Activated B cell treated with CpG ODN at 0.5 μM for 24 hours (primary cell): ENCODE measurements at regions of chr19 and their contacts with region 1.

Region 1: DNA sequence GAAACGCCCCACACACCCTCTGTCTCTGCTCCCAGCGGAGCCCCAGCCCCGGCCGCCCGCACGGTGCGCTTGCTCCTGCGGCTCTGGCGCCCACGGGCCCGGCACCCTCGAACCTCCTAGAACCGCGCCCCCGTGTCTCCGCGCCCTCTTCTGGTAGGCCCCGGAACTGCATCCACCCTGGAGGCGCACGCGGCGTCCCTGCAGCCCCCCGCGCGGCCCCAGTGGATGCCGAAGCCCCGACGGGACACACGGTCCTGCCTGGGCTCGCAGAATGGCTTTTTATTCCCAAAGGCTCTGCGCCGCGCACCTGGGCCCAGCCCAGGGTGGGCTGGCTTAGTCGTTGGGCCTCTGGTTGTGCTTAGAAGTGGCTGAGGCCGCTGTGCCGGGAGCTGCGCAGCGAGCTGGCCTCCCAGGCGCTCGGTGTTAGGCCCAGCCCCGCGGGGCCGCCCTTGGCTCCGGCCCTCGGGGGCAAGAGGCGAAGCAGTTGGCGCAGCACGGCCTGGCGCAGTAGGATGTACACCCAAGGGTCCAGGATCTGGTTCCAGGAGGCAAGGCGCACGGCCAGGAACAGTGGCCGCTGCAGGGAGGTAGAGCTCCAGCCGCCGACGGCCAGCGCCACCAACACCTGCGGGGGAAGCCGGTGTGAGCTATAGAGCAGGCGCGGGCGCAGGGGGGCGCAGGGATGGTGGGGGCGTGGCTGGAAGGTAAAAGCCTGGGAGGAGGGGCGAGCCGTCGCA is 2.8 kb downstream of the PTGER1 start:
- DNase-seq: peak; percentile 87
- ATAC-seq: peak; percentile 83
- H3K4me3 Mint-ChIP-seq: peak overlapping the region; percentile 24
- H3K27ac Mint-ChIP-seq: no peak overlapping the region
- H3K4me1 Mint-ChIP-seq: peaks cover 25% of the 10 kb centered on the region
- H3K27me3 Mint-ChIP-seq: peaks cover 28% of the 10 kb centered on the region
- CTCF ChIP-seq: peak; percentile 92

Region 2: DNA sequence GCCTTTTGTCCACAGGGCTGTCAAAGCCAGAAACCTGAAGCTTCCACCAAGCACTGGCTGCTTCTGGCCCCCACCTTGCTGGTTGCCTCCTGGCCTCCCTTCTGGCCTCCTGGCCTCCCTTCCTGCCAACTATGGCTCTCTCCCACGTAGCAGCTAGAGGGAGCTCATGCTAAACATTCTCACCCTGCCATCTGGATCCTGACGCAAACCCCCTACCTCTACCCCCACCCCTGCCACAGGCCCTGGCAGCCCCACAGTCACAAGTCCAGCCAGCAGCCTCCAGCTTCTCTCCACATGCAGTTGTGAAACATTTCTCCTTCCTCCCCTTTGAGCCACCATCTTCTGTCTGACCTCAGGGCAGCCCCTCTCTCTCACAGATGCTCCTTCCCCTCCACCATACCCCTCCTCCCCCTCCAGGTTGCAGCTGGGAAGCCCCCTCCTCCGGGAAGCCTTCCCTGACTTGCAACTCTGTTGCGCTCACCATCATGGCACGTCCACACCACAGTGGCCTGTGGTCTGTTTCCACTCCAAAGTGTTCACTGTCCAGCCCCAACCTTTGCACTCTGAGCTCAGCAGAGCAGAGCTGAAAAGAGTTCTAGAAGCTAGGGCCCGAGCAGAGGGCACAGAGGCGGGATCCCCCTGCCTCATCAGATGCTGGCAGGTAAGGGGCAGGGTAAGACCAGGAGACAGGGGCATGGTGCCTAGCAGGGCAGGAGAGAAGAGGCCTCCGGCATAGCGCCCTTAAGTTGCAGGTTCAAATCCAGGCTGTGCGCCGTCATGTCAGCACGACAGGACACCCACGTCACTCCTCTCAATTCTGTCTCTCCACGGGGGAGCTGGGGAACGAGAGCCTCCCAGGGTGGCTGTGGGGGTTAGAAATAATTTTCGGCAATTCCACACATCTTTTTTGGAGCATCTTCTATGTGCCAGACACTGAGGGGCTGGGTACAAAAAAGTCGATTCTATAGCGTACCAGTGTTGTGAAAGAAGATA is 273.7 kb before region 1 on chr19:
- CTCF ChIA-PET with region 1: no interaction called
- POLR2A ChIA-PET with region 1: no interaction called
- intact Hi-C with region 1: loop called (anchors 1 kb)
- DNase-seq: no peak
- ATAC-seq: no peak
- H3K4me3 Mint-ChIP-seq: no peak overlapping the region
- H3K27ac Mint-ChIP-seq: no peak overlapping the region
- H3K4me1 Mint-ChIP-seq: peaks cover 10% of the 10 kb centered on the region
- H3K27me3 Mint-ChIP-seq: peaks cover 5% of the 10 kb centered on the region
- CTCF ChIP-seq: no peak

Region 3: GRCh38 chr19:14354445-14354844 is 117.9 kb before region 1 on chr19:
- CTCF ChIA-PET with region 1: interaction called, 4 read pairs
- POLR2A ChIA-PET with region 1: interaction called, 16 read pairs
- intact Hi-C with region 1: no loop called
- DNase-seq: no peak
- ATAC-seq: no peak
- H3K4me3 Mint-ChIP-seq: no peak overlapping the region
- H3K27ac Mint-ChIP-seq: no peak overlapping the region
- H3K4me1 Mint-ChIP-seq: peaks cover 34% of the 10 kb centered on the region
- H3K27me3 Mint-ChIP-seq: no peaks in the 10 kb centered on the region
- CTCF ChIP-seq: no peak

Region 4: GRCh38 chr19:14366498-14366915 is 105.9 kb before region 1 on chr19:
- CTCF ChIA-PET with region 1: interaction called, 3 read pairs
- POLR2A ChIA-PET with region 1: interaction called, 6 read pairs
- intact Hi-C with region 1: loop called (anchors 1 kb)
- DNase-seq: peak; percentile 63
- ATAC-seq: peak; percentile 38
- H3K4me3 Mint-ChIP-seq: peak overlapping the region; percentile 22
- H3K27ac Mint-ChIP-seq: peak overlapping the region; percentile 93
- H3K4me1 Mint-ChIP-seq: peaks cover 77% of the 10 kb centered on the region
- H3K27me3 Mint-ChIP-seq: no peaks in the 10 kb centered on the region
- CTCF ChIP-seq: no peak

Region 5: GRCh38 chr19:14432791-14433553 is 39.4 kb before region 1 on chr19 and contains the start of gene PKN1:
- CTCF ChIA-PET with region 1: interaction called, 7 read pairs
- POLR2A ChIA-PET with region 1: interaction called, 7 read pairs
- intact Hi-C with region 1: loop called (anchors 1 kb)
- DNase-seq: peak; percentile 72
- ATAC-seq: peak; percentile 63
- H3K4me3 Mint-ChIP-seq: peak within 1 kb of the TSS; percentile 87
- H3K27ac Mint-ChIP-seq: peak within 1 kb of the TSS; percentile 76
- H3K4me1 Mint-ChIP-seq: peaks cover 30% of the 10 kb centered on the region
- H3K27me3 Mint-ChIP-seq: no peaks in the 10 kb centered on the region
- CTCF ChIP-seq: no peak
- total RNA-seq, gene PKN1: 139 and 159 TPM in 2 replicates